ENCODE measurements at regions of chr12 and their contacts with region 1.

Region 1: DNA sequence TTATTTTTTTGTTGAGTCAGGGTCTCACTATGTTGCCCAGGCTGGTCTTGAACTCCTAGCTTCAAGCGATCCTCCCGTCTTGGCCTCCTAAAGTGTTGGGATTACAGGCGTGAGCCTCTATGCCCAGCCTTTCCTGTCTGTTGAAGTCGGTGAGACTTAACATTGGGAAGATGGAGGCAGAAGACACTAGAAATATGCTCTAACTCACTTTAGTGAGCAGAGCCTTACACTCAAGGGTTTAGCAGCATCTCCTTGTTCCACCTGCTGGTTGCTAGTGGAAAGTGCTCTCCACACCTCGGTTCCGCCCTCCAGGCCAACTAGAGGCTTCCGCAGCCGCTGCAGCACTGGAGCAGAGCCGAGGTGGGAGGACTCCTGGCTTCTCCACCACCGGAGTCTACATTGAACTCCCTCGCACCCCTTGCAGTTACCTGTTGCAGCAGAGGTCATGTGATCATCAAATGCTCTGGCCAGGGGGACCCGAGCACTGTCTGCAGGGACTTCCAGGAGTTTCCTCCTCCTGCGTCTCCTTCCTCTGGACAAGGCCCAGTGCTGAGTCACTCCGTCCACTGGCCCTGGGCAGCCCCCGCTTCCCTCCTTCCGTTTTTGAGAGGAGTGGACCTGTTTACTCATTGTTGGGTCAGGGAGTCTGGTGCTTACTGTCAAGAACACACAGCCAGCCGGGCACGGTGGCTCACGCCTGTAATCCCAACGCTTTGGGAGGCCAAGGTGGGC is 9.4 kb upstream of the HVCN1 start:
- DNase-seq: peak; percentile 90
- H3K4me3 Mint-ChIP-seq: no peak overlapping the region
- H3K27ac Mint-ChIP-seq: peak overlapping the region; percentile 77
- H3K4me1 Mint-ChIP-seq: peaks cover 24% of the 10 kb centered on the region
- H3K27me3 Mint-ChIP-seq: no peaks in the 10 kb centered on the region

Region 2: GRCh38 chr12:110458756-110459155 is 239.6 kb before region 1 on chr12:
- CTCF ChIA-PET with region 1: no interaction called
- DNase-seq: no peak
- H3K4me3 Mint-ChIP-seq: no peak overlapping the region
- H3K27ac Mint-ChIP-seq: no peak overlapping the region
- H3K4me1 Mint-ChIP-seq: peaks cover 6% of the 10 kb centered on the region
- H3K27me3 Mint-ChIP-seq: no peaks in the 10 kb centered on the region

Region 3: DNA sequence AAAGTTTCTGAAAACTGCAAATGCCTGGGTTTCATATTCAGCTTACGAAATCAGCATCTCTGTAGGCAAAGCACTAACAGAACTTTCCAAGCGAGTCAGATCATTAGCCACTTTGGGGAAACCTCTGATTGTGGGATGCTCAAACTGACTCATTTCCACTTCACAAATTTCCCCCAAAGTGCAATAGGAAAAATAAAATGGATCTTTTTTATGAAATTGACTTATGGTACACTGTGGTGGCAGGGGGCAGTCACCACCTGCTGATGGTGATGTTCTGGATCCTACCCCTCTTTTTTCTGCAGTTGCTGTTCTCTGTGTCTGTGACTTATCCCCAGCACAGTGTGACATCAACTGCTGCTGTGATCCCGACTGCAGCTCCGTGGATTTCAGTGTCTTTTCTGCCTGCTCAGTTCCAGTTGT is 78.8 kb before region 1 on chr12:
- CTCF ChIA-PET with region 1: interaction called, 14 read pairs
- DNase-seq: peak; percentile 43
- H3K4me3 Mint-ChIP-seq: no peak overlapping the region
- H3K27ac Mint-ChIP-seq: peak overlapping the region; percentile 52
- H3K4me1 Mint-ChIP-seq: peaks cover 5% of the 10 kb centered on the region
- H3K27me3 Mint-ChIP-seq: no peaks in the 10 kb centered on the region

Region 4: GRCh38 chr12:110874781-110875180 is 176.4 kb after region 1 on chr12:
- CTCF ChIA-PET with region 1: no interaction called
- DNase-seq: no peak
- H3K4me3 Mint-ChIP-seq: no peak overlapping the region
- H3K27ac Mint-ChIP-seq: no peak overlapping the region
- H3K4me1 Mint-ChIP-seq: no peaks in the 10 kb centered on the region
- H3K27me3 Mint-ChIP-seq: peaks cover 24% of the 10 kb centered on the region

Measured in activated naive CD4-positive, alpha-beta T cell treated with anti-CD3 and anti-CD28 coated beads, Interleukin-2, amount 10 ng/mL, durations not matched to agents 7 days and 5 days (primary cell).